ENCODE measurements at regions of chr11 and their contacts with region 1.

Region 1: GRCh38 chr11:36289226-36289852 is at the start of gene COMMD9:
- DNase-seq: peak; percentile 86 to 97
- H3K4me3 ChIP-seq: peak within 1 kb of the TSS; percentile 51 to 69
- H3K27ac ChIP-seq: no peak within 1 kb of the TSS
- H3K4me1 ChIP-seq: peaks cover 5 to 8% of the 10 kb centered on the region in 2 donors
- H3K27me3 ChIP-seq: no peaks in the 10 kb centered on the region
- CTCF ChIP-seq: no peak
- total RNA-seq, gene COMMD9: 69.2 TPM

Region 2: GRCh38 chr11:36376888-36377758 is 87.8 kb after region 1 on chr11:
- intact Hi-C with region 1: loop called (anchors 5 kb)
- DNase-seq: peak in 1 of 2 donors; percentile 71
- H3K4me3 ChIP-seq: peak overlapping the region; percentile 65 to 78
- H3K27ac ChIP-seq: peak overlapping the region in 1 of 2 donors; percentile 62
- H3K4me1 ChIP-seq: peaks cover 0 to 4% of the 10 kb centered on the region in 2 donors
- H3K27me3 ChIP-seq: peaks cover 7% of the 10 kb centered on the region
- CTCF ChIP-seq: peak; percentile 36 to 52 (median 45)

Region 3: GRCh38 chr11:36390963-36391471 is 101.7 kb after region 1 on chr11:
- intact Hi-C with region 1: no loop called
- DNase-seq: no peak
- H3K4me3 ChIP-seq: no peak overlapping the region
- H3K27ac ChIP-seq: no peak overlapping the region
- H3K4me1 ChIP-seq: no peaks in the 10 kb centered on the region
- H3K27me3 ChIP-seq: no peaks in the 10 kb centered on the region
- CTCF ChIP-seq: no peak

Region 4: GRCh38 chr11:36492724-36493304 is 203.5 kb after region 1 on chr11:
- intact Hi-C with region 1: loop called (anchors 5 kb)
- DNase-seq: no peak
- H3K4me3 ChIP-seq: no peak overlapping the region
- H3K27ac ChIP-seq: no peak overlapping the region
- H3K4me1 ChIP-seq: peaks cover 0 to 3% of the 10 kb centered on the region in 2 donors
- H3K27me3 ChIP-seq: no peaks in the 10 kb centered on the region
- CTCF ChIP-seq: peak; percentile 43 to 81 (median 77)

Region 5: GRCh38 chr11:36500315-36500721 is 211.0 kb after region 1 on chr11:
- intact Hi-C with region 1: loop called (anchors 5 kb)
- DNase-seq: peak; percentile 22 to 75
- H3K4me3 ChIP-seq: no peak overlapping the region
- H3K27ac ChIP-seq: peak overlapping the region; percentile 71 to 81
- H3K4me1 ChIP-seq: peaks cover 6 to 25% of the 10 kb centered on the region in 2 donors
- H3K27me3 ChIP-seq: no peaks in the 10 kb centered on the region
- CTCF ChIP-seq: no peak

Region 6: GRCh38 chr11:36594316-36594989 is 305.1 kb after region 1 on chr11 and contains the start of gene IFTAP:
- intact Hi-C with region 1: loop called (anchors 5 kb)
- DNase-seq: peak in 1 of 2 donors; percentile 79
- H3K4me3 ChIP-seq: peak within 1 kb of the TSS; percentile 87 to 88
- H3K27ac ChIP-seq: peak within 1 kb of the TSS; percentile 55 to 59
- H3K4me1 ChIP-seq: peaks cover 0 to 6% of the 10 kb centered on the region in 2 donors
- H3K27me3 ChIP-seq: no peaks in the 10 kb centered on the region
- CTCF ChIP-seq: no peak
- total RNA-seq, gene IFTAP: 7.1 TPM

Region 7: GRCh38 chr11:36724742-36725385 is 435.5 kb after region 1 on chr11:
- intact Hi-C with region 1: no loop called
- DNase-seq: no peak
- H3K4me3 ChIP-seq: no peak overlapping the region
- H3K27ac ChIP-seq: no peak overlapping the region
- H3K4me1 ChIP-seq: no peaks in the 10 kb centered on the region
- H3K27me3 ChIP-seq: no peaks in the 10 kb centered on the region
- CTCF ChIP-seq: no peak